ENCODE measurements at regions of chr1 and their contacts with region 1.

Region 1: DNA sequence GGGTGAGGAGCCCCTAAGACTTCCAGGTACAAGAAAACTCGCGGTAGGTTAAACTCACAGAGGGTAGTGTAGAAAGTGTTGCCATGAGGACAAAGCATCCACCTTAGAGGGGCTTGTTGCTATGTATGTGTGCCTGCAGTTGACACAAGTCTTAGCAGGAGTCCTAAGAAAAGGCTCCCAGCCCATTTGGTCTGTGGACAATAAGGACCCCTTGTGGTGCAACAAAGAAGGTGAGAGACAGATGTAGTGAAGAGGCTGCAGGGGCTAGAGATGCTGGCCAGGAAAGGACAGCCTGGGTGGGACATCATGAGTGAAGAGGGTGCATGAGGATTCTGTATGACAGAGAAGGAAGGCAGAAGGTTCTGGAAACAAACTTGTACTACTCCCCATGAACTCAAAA is 36.3 kb upstream of the IL10 start:
- DNase-seq: peak; percentile 21
- H3K4me3 Mint-ChIP-seq: no peak overlapping the region
- H3K27ac Mint-ChIP-seq: no peak overlapping the region
- H3K4me1 Mint-ChIP-seq: no peaks in the 10 kb centered on the region
- H3K27me3 Mint-ChIP-seq: peaks cover 97% of the 10 kb centered on the region
- CTCF ChIP-seq: no peak

Region 2: DNA sequence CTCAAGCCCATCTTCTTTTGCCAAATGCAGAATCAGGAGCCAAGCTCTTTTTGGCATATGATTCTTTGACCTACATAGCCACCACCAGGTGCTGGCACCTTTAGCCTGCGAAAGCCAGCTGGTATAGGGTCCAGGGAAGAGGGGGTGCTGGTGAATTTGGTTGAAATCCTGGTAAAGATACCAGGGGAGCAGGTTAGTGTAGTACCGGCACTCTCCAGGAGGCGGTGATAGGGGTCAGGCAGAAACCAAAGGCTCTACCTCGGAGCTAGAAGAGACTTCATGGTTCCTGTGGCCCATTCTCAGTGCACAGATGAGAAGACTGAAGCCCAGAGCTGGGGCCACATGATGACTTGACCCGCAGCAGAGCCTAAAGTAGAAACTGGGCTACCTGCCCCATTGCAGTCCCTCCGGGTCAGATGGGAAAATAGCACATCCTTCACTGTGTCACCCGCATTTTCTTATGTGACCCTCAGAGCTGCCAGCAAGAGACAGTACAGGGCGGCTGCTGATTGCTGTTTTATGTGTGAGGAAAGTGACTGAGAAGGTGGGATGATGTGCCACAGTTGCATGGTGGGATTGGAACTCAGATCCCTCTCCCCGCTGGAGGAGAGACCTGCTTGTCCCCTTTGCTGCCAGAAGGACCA is 74.0 kb before region 1 on chr1:
- CTCF ChIA-PET with region 1: interaction called, 4 read pairs
- intact Hi-C with region 1: loop called (anchors 5 kb)
- DNase-seq: peak; percentile 77
- H3K4me3 Mint-ChIP-seq: no peak overlapping the region
- H3K27ac Mint-ChIP-seq: no peak overlapping the region
- H3K4me1 Mint-ChIP-seq: peaks cover 13% of the 10 kb centered on the region
- H3K27me3 Mint-ChIP-seq: no peaks in the 10 kb centered on the region
- CTCF ChIP-seq: peak; percentile 89